Uterus (tissue), 4 donors: ENCODE measurements at regions of chr6 and their contacts with region 1.

Region 1: DNA sequence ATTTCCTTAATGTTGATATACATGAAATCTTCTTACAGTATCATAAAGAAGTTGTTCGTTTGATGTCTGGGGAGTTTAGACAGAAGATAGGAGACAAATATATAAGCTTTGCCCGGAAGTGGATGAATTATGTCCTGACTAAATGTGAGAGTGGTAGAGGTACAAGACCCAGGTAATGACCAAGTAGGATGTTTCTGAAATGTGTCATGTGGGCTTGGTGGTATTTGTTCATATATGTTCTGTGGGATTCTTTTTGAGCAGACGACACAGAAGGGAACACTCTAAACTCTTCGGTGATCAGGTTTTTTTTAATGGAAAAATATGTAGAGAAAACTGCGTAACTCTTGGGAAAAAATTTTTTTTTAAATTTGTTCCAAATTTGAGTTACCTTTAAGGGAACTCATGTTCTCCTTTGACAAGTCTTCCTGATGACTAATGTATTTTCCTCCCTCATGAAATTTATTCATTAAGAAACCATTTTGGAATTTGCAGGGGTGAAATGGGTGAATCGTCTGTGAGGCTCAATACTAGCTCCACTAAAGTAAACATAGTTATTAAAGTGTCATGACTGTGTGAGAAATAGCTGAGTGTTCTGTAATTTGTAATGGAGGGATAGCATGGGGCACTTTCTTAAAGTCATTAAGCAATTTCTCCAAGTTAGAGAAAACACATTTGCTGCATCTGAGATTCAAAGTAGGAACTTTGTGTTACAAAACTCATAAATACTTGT is 100.6 kb downstream of the MAP3K4 start:
- DNase-seq: peak in 1 of 2 donors; percentile 45
- H3K4me3 ChIP-seq: no peak overlapping the region
- H3K27ac ChIP-seq: peak overlapping the region; percentile 75 to 83
- H3K4me1 ChIP-seq: peaks cover 0 to 3% of the 10 kb centered on the region in 2 donors
- H3K27me3 ChIP-seq: no peaks in the 10 kb centered on the region
- CTCF ChIP-seq: no peak
- POLR2A ChIP-seq: no peak

Region 2: DNA sequence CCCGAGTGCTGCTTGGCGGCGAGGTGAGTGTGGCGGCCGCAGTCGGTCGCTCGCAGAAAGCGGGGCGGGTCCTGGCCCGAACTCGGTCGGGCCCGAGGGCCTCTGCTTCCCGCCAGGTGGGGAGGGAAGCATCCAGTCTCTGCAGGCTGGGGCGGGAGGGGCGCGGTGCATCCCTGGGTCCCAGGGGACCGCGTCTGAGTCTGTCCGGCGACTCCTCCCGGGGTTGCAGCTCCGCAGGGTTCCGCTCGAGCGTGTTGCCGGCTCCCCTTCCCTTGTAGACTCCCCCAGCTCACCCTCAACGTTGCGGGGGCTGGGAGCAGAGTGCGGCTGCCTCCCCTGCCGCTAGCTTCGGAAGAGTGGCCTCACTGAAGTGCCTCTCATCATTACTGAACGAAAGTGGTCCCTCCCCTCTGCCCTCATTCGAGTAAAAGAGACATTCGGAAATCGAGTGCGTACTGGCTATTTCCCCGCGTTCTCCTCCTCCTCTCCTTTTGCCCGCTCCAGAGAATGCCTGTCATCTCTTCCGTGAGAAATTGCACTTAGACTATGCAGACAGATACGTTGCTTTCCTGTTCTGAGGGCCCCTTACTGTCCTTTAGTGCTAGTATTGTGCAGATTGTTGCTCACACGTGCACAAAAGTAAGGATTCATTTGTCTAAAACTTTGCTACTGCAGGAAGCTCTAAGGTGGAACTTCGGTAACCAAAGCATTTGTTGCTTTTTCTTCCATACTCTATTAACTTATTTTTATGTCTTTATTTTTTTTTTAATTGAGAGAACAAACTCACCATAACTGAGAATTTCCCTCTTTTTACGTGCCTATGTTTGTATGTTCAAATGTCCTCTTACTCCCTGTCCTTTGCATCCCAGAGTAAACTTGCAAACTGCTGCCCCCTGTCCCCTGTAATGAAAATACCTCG is 99.8 kb before region 1 on chr6:
- intact Hi-C with region 1: loop called (anchors 10 kb)
- DNase-seq: peak; percentile 60 to 66
- H3K4me3 ChIP-seq: peak overlapping the region; percentile 97 to 98
- H3K27ac ChIP-seq: peak overlapping the region; percentile 94 to 96
- H3K4me1 ChIP-seq: no peaks in the 10 kb centered on the region
- H3K27me3 ChIP-seq: no peaks in the 10 kb centered on the region
- CTCF ChIP-seq: peak; percentile 53 to 75 (median 62)
- POLR2A ChIP-seq: no peak

Region 3: GRCh38 chr6:161029195-161029809 is 62.8 kb before region 1 on chr6:
- intact Hi-C with region 1: no loop called
- DNase-seq: peak in 1 of 2 donors; percentile 55
- H3K4me3 ChIP-seq: no peak overlapping the region
- H3K27ac ChIP-seq: peak overlapping the region; percentile 68 to 94
- H3K4me1 ChIP-seq: peaks cover 0 to 6% of the 10 kb centered on the region in 2 donors
- H3K27me3 ChIP-seq: no peaks in the 10 kb centered on the region
- CTCF ChIP-seq: no peak
- POLR2A ChIP-seq: no peak

Region 4: GRCh38 chr6:161186173-161186769 is 94.1 kb after region 1 on chr6:
- intact Hi-C with region 1: no loop called
- DNase-seq: no peak
- H3K4me3 ChIP-seq: no peak overlapping the region
- H3K27ac ChIP-seq: no peak overlapping the region
- H3K4me1 ChIP-seq: no peaks in the 10 kb centered on the region
- H3K27me3 ChIP-seq: no peaks in the 10 kb centered on the region
- CTCF ChIP-seq: no peak
- POLR2A ChIP-seq: no peak